Adrenal gland (tissue), 19 donors: ENCODE measurements at regions of chr3 and their contacts with region 1.

Region 1: DNA sequence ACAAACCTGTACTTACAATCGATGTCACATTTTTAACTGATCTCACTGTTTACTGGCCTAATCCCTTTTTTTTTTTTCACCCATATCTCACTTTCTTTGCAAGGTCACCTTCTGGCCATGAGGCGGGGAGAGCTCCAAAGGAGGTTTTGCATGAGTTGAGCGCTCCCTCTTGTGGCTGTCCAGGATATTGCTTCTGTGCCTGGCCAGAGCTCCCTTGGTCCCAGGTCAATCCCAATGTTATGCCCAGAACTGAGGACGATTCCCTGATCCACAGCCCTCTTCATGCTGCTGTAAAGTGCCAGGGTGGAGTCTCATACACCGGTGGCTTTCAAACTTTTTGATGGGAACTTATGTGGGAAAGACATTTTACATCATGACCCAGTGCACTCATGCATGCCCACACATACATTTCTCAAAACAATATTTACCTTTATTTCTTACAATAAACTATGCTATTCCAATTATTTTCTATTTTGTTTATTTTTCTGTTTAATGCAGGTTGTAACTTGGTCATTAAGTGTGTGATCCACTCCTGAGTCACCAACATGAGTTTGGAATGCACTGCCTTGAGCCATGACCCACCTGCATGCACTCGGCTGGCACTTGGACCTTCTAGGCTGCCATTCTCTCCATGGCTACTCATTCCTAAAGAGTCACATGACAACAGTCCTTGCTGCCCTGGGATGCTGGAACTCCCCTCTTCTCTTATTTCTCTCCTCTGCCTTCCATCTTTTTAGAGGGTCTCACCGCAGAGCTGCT is 9.6 kb upstream of the SST start:
- DNase-seq: peak; percentile 81 to 95 (median 88)
- H3K4me3 ChIP-seq: no peak overlapping the region
- H3K27ac ChIP-seq: no peak overlapping the region
- H3K4me1 ChIP-seq: peaks cover 3 to 6% of the 10 kb centered on the region in 2 donors
- H3K27me3 ChIP-seq: no peaks in the 10 kb centered on the region
- CTCF ChIP-seq: peak; percentile 87 to 98 (median 94)
- POLR2A ChIP-seq: no peak

Region 2: DNA sequence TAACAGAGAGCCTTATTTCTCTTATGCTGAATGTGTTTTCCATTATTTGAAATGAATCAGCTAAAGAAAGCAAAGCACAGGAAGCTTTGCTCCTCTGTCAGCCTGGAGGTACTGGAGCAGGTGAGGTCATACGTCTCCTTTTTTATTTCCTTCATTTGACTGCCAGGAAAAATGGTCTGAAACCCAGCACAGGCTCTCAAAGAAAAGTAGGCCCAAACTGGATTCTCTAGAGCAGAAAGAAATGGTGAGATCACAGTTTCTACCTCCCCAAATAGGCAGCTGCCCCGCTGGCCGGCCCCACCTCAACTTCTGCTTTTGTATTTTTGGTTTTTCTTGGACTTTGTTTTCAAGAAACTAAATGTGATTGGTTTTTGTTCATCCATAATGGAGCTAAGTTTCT is 635.6 kb before region 1 on chr3:
- intact Hi-C with region 1: no loop called
- DNase-seq: no peak
- H3K4me3 ChIP-seq: no peak overlapping the region
- H3K27ac ChIP-seq: no peak overlapping the region
- H3K4me1 ChIP-seq: peaks cover 5 to 18% of the 10 kb centered on the region in 2 donors
- H3K27me3 ChIP-seq: no peaks in the 10 kb centered on the region
- CTCF ChIP-seq: no peak
- POLR2A ChIP-seq: no peak

Region 3: GRCh38 chr3:187227658-187228258 is 452.1 kb before region 1 on chr3:
- intact Hi-C with region 1: loop called (anchors 5 kb)
- DNase-seq: no peak
- H3K4me3 ChIP-seq: no peak overlapping the region
- H3K27ac ChIP-seq: no peak overlapping the region
- H3K4me1 ChIP-seq: no peaks in the 10 kb centered on the region
- H3K27me3 ChIP-seq: no peaks in the 10 kb centered on the region
- CTCF ChIP-seq: no peak
- POLR2A ChIP-seq: no peak